Caco-2 (cell line): ENCODE measurements at regions of chr20 and their contacts with region 1.

Region 1: GRCh38 chr20:52379723-52380336 is 188.3 kb upstream of the ZFP64 start:
- DNase-seq: peak in 1 of 2 experiments; percentile 80
- H3K4me3 ChIP-seq: no peak overlapping the region
- H3K4me3 Mint-ChIP-seq: no peak overlapping the region
- H3K27ac Mint-ChIP-seq: no peak overlapping the region
- H3K4me1 ChIP-seq: no peaks in the 10 kb centered on the region
- H3K4me1 Mint-ChIP-seq: no peaks in the 10 kb centered on the region
- H3K27me3 ChIP-seq: no peaks in the 10 kb centered on the region
- H3K27me3 Mint-ChIP-seq: peaks cover 19% of the 10 kb centered on the region
- CTCF ChIP-seq: peak; percentile 99 to 100

Region 2: GRCh38 chr20:52242237-52243230 is 137.3 kb before region 1 on chr20:
- CTCF ChIA-PET with region 1: no interaction called
- POLR2A ChIA-PET with region 1: no interaction called
- intact Hi-C with region 1: loop called (anchors 1 kb)
- DNase-seq: no peak
- H3K4me3 ChIP-seq: no peak overlapping the region
- H3K4me3 Mint-ChIP-seq: no peak overlapping the region
- H3K27ac Mint-ChIP-seq: no peak overlapping the region
- H3K4me1 ChIP-seq: no peaks in the 10 kb centered on the region
- H3K4me1 Mint-ChIP-seq: no peaks in the 10 kb centered on the region
- H3K27me3 ChIP-seq: no peaks in the 10 kb centered on the region
- H3K27me3 Mint-ChIP-seq: peaks cover 6% of the 10 kb centered on the region
- CTCF ChIP-seq: peak; percentile 43 to 94

Region 3: GRCh38 chr20:52312132-52312729 is 67.6 kb before region 1 on chr20:
- CTCF ChIA-PET with region 1: interaction called, 26 read pairs
- POLR2A ChIA-PET with region 1: no interaction called
- intact Hi-C with region 1: loop called (anchors 1 kb)
- DNase-seq: peak; percentile 63 to 75
- H3K4me3 ChIP-seq: no peak overlapping the region
- H3K4me3 Mint-ChIP-seq: no peak overlapping the region
- H3K27ac Mint-ChIP-seq: no peak overlapping the region
- H3K4me1 ChIP-seq: no peaks in the 10 kb centered on the region
- H3K4me1 Mint-ChIP-seq: no peaks in the 10 kb centered on the region
- H3K27me3 ChIP-seq: no peaks in the 10 kb centered on the region
- H3K27me3 Mint-ChIP-seq: peaks cover 26% of the 10 kb centered on the region
- CTCF ChIP-seq: peak; percentile 91 to 97

Region 4: DNA sequence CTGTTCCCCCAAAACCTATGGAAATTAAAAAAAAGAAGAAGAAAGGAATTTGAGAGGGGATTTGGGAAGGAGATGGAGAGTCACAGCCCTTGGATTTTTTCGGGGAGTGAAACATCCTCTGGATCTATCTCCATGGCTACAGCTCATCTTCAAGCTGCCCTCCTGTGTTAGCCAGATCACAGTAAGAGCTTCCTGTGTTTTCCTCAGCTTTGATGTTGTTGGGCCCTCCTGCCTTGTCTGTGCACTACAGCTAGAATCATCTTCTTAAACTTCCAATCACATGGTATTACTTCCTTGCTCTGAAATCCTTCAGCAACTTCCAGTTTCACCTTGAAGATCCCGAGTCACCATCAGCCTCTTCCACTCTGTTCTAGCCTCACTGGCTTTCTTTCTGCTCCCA is 19.5 kb after region 1 on chr20:
- CTCF ChIA-PET with region 1: no interaction called
- POLR2A ChIA-PET with region 1: no interaction called
- intact Hi-C with region 1: no loop called
- DNase-seq: no peak
- H3K4me3 ChIP-seq: no peak overlapping the region
- H3K4me3 Mint-ChIP-seq: no peak overlapping the region
- H3K27ac Mint-ChIP-seq: no peak overlapping the region
- H3K4me1 ChIP-seq: no peaks in the 10 kb centered on the region
- H3K4me1 Mint-ChIP-seq: no peaks in the 10 kb centered on the region
- H3K27me3 ChIP-seq: no peaks in the 10 kb centered on the region
- H3K27me3 Mint-ChIP-seq: peaks cover 12% of the 10 kb centered on the region
- CTCF ChIP-seq: no peak